Dorsolateral prefrontal cortex (tissue), 120 donors: ENCODE measurements at regions of chr5 and their contacts with region 1.

Region 1: DNA sequence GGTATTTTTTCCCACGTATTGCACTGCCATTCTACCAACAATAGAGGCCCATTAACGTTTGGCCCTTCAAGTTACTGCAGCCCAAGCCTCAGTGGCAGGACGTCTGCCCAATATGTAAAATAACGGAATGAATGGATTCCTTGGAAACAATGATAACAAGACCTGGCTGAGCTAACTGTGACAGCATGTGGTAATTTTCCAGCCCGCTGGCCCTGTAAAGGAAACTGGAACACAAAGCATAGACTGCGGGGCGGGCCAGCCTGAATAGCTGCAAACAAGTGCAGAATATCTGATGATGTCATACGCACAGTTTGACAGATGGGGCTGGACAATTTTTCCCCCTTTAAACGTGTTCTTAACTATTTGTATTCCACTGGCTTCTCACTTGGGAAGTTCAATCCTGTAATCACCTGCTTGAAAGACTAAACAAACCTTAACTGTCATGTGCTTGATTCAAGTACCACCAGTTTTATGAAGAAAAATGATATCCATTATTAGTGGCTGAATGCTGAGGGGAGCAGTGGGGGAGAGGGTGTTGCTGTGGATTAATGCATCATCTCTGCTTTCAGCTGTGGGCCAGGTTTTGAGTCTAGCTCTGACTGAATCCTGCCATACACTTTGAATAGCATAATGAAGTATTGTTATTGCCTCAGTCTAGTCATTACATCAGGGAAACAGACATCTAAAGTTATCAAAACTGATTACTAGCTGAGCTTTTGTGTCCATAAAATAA is 323.9 kb downstream of the TMEM161B start:
- DNase-seq: peak; percentile 73 to 96 (median 90)
- H3K4me3 ChIP-seq: peak overlapping the region in 4 of 59 donors; percentile 4 to 17 (median 7)
- H3K27ac ChIP-seq: peak overlapping the region in 55 of 59 donors; percentile 7 to 86 (median 68)
- H3K27me3 ChIP-seq: no peaks in the 10 kb centered on the region
- CTCF ChIP-seq: peak in 14 of 56 donors; percentile 4 to 36 (median 18)

Region 2: GRCh38 chr5:88049156-88049555 is 104.4 kb after region 1 on chr5:
- intact Hi-C with region 1: no loop called
- DNase-seq: no peak
- H3K4me3 ChIP-seq: no peak overlapping the region
- H3K27ac ChIP-seq: peak overlapping the region in 29 of 59 donors; percentile 1 to 71 (median 46)
- H3K27me3 ChIP-seq: no peaks in the 10 kb centered on the region
- CTCF ChIP-seq: no peak

Region 3: DNA sequence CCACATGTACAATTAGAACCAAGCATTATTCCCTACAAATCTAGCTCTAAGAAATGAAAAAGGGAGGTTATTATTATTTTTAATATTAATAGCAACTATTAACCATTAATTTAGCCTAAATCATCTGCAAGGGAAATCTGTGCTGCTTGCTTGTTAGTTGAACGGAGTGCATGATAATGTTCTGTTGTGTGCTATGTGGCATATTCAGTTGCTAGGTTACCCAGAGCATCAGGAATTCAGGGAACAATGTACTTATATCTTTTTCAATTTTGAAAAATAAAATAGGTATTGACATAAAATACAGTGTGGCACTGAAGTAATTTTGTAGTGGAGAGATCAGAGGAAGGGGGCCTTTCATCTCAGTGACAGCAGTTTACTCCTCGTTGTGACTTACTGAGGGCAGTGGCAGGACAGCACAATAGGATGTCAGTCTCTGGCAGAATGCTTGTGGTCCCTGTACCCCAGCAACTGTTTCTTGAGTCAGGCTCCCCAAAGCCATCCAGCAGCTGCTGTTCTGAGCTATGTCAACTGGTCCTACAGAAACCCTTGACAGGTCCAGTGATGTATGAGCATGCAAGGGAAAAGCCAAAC is 150.3 kb after region 1 on chr5:
- intact Hi-C with region 1: loop called in 1 of 2 experiments (anchors 5 kb)
- DNase-seq: no peak
- H3K4me3 ChIP-seq: no peak overlapping the region
- H3K27ac ChIP-seq: peak overlapping the region in 32 of 59 donors; percentile 5 to 82 (median 54)
- H3K27me3 ChIP-seq: no peaks in the 10 kb centered on the region
- CTCF ChIP-seq: no peak